ENCODE measurements at regions of chr14 and their contacts with region 1.

Region 1: GRCh38 chr14:102096214-102097114 is 9.6 kb upstream of the HSP90AA1 start:
- DNase-seq: peak; percentile 50
- ATAC-seq: peak; percentile 86
- H3K4me3 ChIP-seq: no peak overlapping the region
- H3K27ac ChIP-seq: no peak overlapping the region
- H3K4me1 ChIP-seq: peaks cover 26 to 32% of the 10 kb centered on the region in 2 experiments
- H3K27me3 ChIP-seq: no peaks in the 10 kb centered on the region
- CTCF ChIP-seq: peak; percentile 73 to 96 (median 85)
- POLR2A ChIP-seq: no peak
- RAD21 ChIP-seq: peak; percentile 96

Region 2: DNA sequence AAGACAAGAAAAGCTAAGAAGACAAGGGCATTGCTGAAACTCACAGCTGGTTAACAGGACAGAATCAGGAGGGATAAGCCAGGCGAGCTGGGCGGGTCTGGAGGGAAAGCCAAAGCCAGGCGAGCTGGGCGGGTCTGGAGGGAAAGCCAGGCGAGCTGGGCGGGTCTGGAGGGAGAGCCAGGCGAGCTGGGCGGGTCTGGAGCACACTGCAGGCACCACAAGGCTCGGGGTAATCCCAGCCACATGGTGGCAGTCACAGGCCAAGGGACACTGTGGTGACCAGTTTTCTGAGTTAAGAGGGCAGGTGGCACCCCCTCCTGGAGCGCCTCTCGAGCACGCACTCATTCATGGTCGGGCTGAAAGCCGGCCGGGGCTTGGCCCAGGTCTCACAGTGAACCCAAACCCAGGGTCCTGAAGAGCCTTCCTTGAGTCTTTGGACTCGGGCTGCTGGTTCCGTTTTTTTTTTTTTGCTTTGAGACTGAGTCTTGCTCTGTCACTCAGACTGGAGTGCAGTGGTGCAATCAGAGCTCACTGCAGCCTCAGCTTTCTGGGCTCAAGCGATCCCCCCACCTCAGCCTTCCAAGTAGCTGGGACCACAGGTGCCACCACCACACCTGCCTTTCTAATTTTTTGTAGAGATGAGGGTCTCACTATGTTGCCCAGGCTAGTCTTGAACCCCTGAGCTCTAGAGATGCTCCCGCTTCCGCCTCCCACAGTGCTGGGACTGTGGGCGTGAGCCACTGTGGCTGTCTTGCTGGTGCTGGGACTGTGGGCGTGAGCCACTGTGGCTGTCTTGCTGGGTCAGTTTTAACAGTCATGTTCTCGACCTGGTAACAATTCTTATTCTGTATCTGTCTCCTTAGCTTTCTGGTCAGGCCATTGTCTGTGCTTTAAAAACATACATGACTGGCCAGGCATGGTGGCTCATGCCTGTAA is 49.9 kb before region 1 on chr14:
- CTCF ChIA-PET with region 1: interaction called, 41 read pairs
- POLR2A ChIA-PET with region 1: interaction called, 4 read pairs
- RAD21 ChIA-PET with region 1: interaction called, 12 to 13 read pairs
- intact Hi-C with region 1: loop called (anchors 1 kb)
- DNase-seq: peak; percentile 82
- ATAC-seq: peak; percentile 99
- H3K4me3 ChIP-seq: no peak overlapping the region
- H3K27ac ChIP-seq: peak overlapping the region; percentile 29
- H3K4me1 ChIP-seq: peaks cover 0 to 10% of the 10 kb centered on the region in 2 experiments; a peak in 2 of 4 replicates
- H3K27me3 ChIP-seq: no peaks in the 10 kb centered on the region
- CTCF ChIP-seq: peak; percentile 78 to 99 (median 80)
- POLR2A ChIP-seq: no peak
- RAD21 ChIP-seq: peak; percentile 94

Region 3: DNA sequence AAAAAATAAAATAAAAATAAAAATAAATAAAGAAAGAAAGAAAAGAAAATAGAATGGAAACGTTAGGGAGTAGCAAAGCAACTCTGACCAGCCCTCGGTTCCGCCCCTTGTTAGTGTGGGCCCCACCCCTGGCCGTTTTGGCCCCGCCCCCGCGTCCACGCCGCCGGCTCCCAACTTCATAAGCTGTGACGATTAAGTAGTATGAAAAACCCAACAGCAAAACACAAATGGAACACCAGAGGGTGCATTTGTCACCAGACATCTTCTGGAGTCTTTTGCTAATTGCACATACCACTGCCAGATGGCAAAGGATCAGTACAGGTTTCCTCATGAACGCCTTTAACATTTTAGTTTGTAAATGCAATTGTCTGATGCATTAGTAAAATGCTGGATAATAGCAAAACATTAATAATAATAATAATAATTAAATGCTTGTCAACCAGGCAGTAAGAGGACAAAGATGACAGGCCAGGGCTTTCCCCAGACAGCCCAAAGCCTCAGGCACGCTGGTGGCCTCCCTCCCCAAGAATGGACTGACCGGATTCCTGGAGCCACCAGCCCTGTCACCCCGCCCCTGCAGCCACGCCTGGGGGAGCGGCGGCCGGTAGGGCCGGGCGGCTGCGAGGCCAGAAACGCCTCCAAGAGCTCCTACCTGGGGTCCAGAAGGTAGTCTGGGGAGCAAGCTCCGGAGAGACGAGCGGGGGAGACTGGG is 33.2 kb before region 1 on chr14:
- CTCF ChIA-PET with region 1: interaction called, 45 read pairs
- POLR2A ChIA-PET with region 1: interaction called, 5 read pairs
- RAD21 ChIA-PET with region 1: interaction called, 5 to 10 read pairs
- intact Hi-C with region 1: loop called (anchors 1 kb)
- DNase-seq: peak; percentile 91
- ATAC-seq: peak; percentile 95
- H3K4me3 ChIP-seq: peak overlapping the region; percentile 6 to 34; a peak in 3 of 4 replicates
- H3K27ac ChIP-seq: peak overlapping the region; percentile 70
- H3K4me1 ChIP-seq: peaks cover 12 to 17% of the 10 kb centered on the region in 2 experiments
- H3K27me3 ChIP-seq: no peaks in the 10 kb centered on the region
- CTCF ChIP-seq: peak; percentile 57 to 88 (median 65)
- POLR2A ChIP-seq: no peak
- RAD21 ChIP-seq: peak; percentile 88

Measured in HCT116 (cell line).